Common myeloid progenitor, CD34-positive (primary cell): ENCODE measurements at regions of chr7 and their contacts with region 1.

Region 1: DNA sequence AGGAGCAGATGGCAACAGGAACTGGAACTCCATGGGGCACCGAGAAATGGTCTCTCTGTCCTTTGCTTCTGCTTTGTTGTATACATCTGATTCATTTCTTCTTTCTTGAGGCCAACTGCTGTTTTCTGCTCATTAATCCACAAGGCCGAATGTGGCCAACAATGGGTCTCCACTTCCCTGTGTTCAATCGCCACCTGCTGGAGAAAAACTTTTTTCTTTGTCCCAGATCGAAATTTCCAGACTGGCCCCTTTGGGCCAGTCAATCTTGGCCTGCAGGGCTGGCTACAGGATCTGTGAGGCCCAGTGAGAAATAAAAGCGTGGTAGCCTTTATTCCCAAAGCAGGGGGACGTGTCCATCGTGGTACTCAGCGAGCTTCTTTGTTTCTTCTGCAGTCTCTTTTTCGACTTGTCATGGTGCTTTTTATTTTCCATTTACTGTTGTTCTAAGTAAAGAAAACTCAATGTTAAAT is 58.8 kb downstream of the PARP12 start:
- DNase-seq: peak; percentile 66 to 82 (median 81)
- H3K4me3 ChIP-seq: no peak overlapping the region
- H3K27ac ChIP-seq: no peak overlapping the region
- H3K4me1 ChIP-seq: no peaks in the 10 kb centered on the region
- H3K27me3 ChIP-seq: no peaks in the 10 kb centered on the region

Region 2: GRCh38 chr7:139602143-139602722 is 401.7 kb before region 1 on chr7:
- CTCF ChIA-PET with region 1: interaction called, 24 read pairs
- POLR2A ChIA-PET with region 1: no interaction called
- DNase-seq: peak; percentile 31 to 68 (median 68)
- H3K4me3 ChIP-seq: no peak overlapping the region
- H3K27ac ChIP-seq: no peak overlapping the region
- H3K4me1 ChIP-seq: peaks cover 0 to 11% (median 7%) of the 10 kb centered on the region in 4 experiments
- H3K27me3 ChIP-seq: no peaks in the 10 kb centered on the region

Region 3: DNA sequence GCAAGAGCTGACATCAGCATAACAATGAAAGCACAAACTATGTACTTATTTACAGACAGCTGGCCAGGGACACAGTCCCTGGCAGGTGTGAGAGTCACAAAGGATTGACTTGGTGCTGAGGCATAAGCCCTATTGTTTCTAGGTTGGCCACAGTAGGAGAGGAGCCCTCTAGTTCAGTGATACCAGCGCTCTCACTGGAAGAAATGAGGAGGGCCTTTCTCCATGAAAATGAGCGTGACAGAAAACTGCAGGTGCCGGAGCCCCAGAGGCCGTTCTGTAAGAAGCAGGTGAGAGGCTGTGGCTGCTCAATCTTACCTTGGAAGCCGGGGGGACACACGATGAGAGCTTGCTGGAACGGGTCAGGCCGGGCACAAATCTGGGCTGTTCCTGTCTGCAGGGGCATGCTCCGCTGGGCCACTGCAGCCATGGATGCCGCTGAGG is 390.0 kb before region 1 on chr7:
- CTCF ChIA-PET with region 1: interaction called, 164 read pairs
- POLR2A ChIA-PET with region 1: no interaction called
- DNase-seq: no peak
- H3K4me3 ChIP-seq: no peak overlapping the region
- H3K27ac ChIP-seq: no peak overlapping the region
- H3K4me1 ChIP-seq: no peaks in the 10 kb centered on the region
- H3K27me3 ChIP-seq: no peaks in the 10 kb centered on the region

Region 4: DNA sequence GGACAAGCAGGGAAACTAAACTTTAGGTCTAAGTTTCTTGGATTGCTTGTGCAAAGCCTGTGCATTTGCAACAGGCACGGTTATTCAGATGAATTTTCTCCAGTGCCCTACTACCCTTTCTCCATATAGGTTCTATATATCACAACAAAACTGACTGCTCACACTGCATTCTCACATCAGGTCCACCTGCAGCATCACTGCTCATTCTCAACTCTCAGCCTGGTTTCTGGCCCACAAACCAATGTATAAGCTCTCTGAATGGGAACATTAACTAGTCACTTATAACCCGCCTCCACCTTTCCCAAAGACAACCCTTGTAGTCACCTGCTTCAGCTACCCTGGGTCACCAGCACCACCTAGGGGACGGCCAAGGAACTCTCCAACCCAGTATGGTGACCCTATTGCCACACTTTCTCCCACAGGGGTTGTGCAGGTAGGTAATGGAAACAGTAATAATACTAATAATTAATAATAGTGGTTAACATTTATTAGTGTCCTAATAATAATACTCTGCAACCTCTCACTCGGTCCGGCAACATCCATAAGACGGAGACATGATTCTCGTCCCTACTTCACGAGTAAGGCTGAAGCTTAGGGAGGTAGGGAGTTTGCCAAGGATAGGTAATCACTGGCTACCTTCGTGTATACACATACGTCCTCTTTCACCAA is 383.1 kb before region 1 on chr7:
- CTCF ChIA-PET with region 1: interaction called, 164 read pairs
- POLR2A ChIA-PET with region 1: no interaction called
- DNase-seq: peak in 2 of 3 donors; percentile 53 to 56
- H3K4me3 ChIP-seq: no peak overlapping the region
- H3K27ac ChIP-seq: no peak overlapping the region
- H3K4me1 ChIP-seq: peaks cover 2 to 25% (median 13%) of the 10 kb centered on the region in 4 experiments
- H3K27me3 ChIP-seq: no peaks in the 10 kb centered on the region

Region 5: GRCh38 chr7:139645572-139646523 is 358.1 kb before region 1 on chr7:
- CTCF ChIA-PET with region 1: interaction called, 127 read pairs
- POLR2A ChIA-PET with region 1: interaction called, 3 read pairs
- DNase-seq: peak; percentile 85 to 92 (median 88)
- H3K4me3 ChIP-seq: no peak overlapping the region
- H3K27ac ChIP-seq: no peak overlapping the region
- H3K4me1 ChIP-seq: peaks cover 14 to 34% (median 22%) of the 10 kb centered on the region in 4 experiments
- H3K27me3 ChIP-seq: no peaks in the 10 kb centered on the region

Region 6: GRCh38 chr7:139762886-139763285 is 241.1 kb before region 1 on chr7:
- CTCF ChIA-PET with region 1: no interaction called
- POLR2A ChIA-PET with region 1: no interaction called
- DNase-seq: no peak
- H3K4me3 ChIP-seq: no peak overlapping the region
- H3K27ac ChIP-seq: no peak overlapping the region
- H3K4me1 ChIP-seq: peaks cover 3 to 17% (median 10%) of the 10 kb centered on the region in 4 experiments
- H3K27me3 ChIP-seq: no peaks in the 10 kb centered on the region

Region 7: DNA sequence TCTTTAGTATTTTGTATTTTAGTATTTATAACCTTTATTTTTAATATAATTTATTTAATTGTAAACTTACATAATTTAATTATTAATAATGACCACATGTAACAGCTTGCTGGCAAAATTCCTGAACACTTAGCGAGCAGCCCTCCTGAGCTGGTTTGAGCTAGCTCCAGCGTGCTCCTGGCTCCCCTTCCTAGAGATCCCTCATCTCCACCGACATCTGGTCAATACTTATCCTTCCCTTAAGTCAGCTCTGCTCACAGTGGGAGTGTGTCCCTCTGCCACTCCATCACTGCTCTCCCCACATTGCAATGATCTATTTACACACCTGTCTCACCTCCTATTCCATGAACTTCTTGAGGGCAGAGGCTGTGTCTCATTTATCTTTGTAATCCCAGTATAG is 195.5 kb before region 1 on chr7:
- CTCF ChIA-PET with region 1: no interaction called
- POLR2A ChIA-PET with region 1: no interaction called
- DNase-seq: no peak
- H3K4me3 ChIP-seq: no peak overlapping the region
- H3K27ac ChIP-seq: no peak overlapping the region
- H3K4me1 ChIP-seq: peaks cover 5 to 20% (median 13%) of the 10 kb centered on the region in 4 experiments
- H3K27me3 ChIP-seq: no peaks in the 10 kb centered on the region

Region 8: DNA sequence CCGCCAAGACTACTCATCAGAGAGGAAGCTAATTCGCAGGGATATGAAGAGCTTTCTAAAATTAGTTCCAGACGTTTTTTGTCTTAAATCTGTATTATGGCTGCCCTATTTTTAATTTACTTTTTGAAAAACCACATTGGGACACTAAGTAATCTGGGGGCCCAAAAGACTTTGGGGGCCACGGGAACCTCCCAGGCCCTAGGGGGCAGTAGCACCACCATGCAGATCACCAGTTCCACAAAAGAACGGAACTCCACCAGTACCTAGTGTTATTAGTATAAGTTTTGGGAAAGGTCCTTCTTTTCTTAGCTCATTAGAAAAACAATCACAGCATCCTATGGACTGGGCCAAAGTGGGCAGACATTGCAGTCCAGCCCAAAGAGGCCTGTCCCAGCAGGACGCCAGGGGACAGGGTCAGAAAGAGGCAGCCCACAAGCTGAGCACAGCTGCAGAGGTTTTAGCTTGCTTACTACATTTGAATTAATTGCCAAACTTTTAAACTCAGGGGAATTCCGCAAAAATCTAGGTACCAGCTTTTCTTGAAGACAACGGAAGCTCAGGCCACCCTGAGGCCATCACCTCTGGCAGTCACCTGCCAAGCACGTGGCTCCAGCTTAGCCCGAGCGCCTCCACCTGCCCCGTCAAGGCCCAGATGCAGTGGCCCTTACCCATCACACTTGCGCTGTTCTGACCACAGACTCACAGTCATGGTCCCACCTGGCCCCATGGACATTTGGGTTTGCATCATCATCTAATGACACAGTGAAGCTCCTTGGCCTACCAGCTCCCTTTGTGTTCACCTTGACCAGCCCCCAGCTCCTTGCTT is 16.0 kb before region 1 on chr7:
- CTCF ChIA-PET with region 1: interaction called, 28 read pairs
- POLR2A ChIA-PET with region 1: no interaction called
- DNase-seq: no peak
- H3K4me3 ChIP-seq: no peak overlapping the region
- H3K27ac ChIP-seq: no peak overlapping the region
- H3K4me1 ChIP-seq: peaks cover 0 to 5% (median 0%) of the 10 kb centered on the region in 4 experiments
- H3K27me3 ChIP-seq: no peaks in the 10 kb centered on the region

Region 9: DNA sequence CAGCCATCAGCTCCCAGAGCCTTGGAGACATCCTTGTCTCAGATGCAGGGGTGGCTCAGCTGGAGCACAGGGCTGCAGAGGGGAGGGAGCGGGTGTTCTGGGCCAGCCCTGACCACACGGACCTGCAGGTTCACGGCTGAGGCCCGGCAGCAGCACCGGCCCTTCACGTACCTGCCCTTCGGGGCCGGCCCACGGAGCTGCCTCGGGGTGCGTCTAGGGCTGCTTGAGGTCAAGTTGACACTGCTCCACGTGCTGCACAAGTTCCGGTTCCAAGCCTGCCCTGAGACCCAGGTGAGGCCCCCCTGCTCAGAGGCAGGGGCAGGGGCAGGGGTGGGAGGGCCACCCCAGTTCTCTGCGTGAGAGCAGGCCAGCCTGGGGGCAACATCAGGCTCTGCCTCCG is 13.6 kb after region 1 on chr7:
- CTCF ChIA-PET with region 1: interaction called, 31 read pairs
- POLR2A ChIA-PET with region 1: no interaction called
- DNase-seq: no peak
- H3K4me3 ChIP-seq: no peak overlapping the region
- H3K27ac ChIP-seq: no peak overlapping the region
- H3K4me1 ChIP-seq: no peaks in the 10 kb centered on the region
- H3K27me3 ChIP-seq: no peaks in the 10 kb centered on the region

Region 10: GRCh38 chr7:140121326-140121725 is 117.4 kb after region 1 on chr7:
- CTCF ChIA-PET with region 1: no interaction called
- POLR2A ChIA-PET with region 1: no interaction called
- DNase-seq: no peak
- H3K4me3 ChIP-seq: no peak overlapping the region
- H3K27ac ChIP-seq: no peak overlapping the region
- H3K4me1 ChIP-seq: no peaks in the 10 kb centered on the region
- H3K27me3 ChIP-seq: no peaks in the 10 kb centered on the region